ENCODE measurements at regions of chr15 and their contacts with region 1.

Region 1: GRCh38 chr15:60585743-60586708 is 107.1 kb upstream of the ICE2 start:
- DNase-seq: no peak
- H3K4me3 ChIP-seq: no peak overlapping the region
- H3K27ac ChIP-seq: peak overlapping the region in 4 of 8 donors; percentile 66 to 93 (median 73)
- H3K4me1 ChIP-seq: peaks cover 16 to 100% (median 48%) of the 10 kb centered on the region in 6 donors
- H3K27me3 ChIP-seq: peaks cover 0 to 15% (median 8%) of the 10 kb centered on the region in 7 donors
- CTCF ChIP-seq: peak; percentile 76 to 94 (median 89)
- POLR2A ChIP-seq: no peak

Region 2: DNA sequence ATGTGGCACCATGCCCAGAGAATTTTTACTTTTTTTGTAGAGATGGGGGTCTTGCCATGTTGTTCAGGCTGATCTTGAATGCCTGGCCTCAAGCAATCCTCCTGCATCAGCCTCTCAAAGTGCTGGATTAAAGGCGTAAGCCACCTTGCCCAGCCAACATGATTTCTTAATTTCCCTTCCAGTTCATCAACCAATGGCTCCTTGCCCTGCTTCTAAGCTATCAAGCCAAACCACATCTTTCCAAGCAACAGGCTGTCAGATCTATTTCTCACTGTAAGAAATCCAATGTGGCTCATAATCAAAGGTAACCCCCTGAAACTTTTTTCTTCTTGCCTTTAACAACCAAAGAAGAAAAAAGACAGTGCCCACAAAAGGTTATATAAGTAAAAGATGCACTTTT is 97.1 kb after region 1 on chr15:
- intact Hi-C with region 1: no loop called
- DNase-seq: no peak
- H3K4me3 ChIP-seq: no peak overlapping the region
- H3K27ac ChIP-seq: no peak overlapping the region
- H3K4me1 ChIP-seq: no peaks in the 10 kb centered on the region
- H3K27me3 ChIP-seq: no peaks in the 10 kb centered on the region
- CTCF ChIP-seq: no peak
- POLR2A ChIP-seq: no peak

Region 3: DNA sequence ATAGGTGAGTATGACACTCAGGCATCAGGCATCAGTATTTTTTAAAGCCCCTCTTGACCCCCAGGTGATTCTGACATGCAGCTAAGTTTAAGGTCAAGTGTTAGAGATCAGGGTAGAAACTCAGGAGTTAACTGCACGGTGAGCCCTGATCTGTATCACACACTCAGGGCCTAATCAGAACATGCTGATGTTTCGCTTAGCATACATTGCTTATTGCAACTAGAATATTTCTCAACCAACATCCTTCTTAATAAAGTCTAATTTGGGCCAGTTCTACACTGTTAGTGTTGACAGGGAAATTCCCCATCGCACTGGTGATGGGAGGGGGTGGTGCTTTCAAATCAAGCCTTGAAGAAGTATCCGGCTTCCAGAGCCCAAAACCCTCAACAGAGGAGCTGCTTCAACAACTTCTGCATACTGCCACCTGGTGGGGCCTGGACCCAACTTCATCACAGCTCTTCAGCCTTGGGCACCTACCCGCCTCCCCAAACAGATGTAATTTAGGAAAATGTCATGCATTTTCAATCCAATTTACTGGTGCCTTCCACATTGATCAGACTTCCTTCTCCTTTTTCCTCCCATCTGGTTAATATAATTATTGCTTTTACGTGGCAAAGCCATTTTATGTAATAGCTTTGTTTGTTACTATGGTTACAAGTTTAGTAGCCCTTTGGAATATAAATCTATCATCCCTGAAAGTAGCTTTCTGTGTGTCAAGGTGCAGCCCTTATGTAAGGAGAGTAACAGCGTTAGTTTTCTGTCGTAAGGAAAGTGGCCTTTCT is 330.8 kb after region 1 on chr15:
- intact Hi-C with region 1: loop called (anchors 2 kb)
- DNase-seq: peak; percentile 90
- H3K4me3 ChIP-seq: peak overlapping the region in 1 of 8 donors; percentile 16
- H3K27ac ChIP-seq: peak overlapping the region in 5 of 8 donors; percentile 15 to 50 (median 34)
- H3K4me1 ChIP-seq: peaks cover 0 to 23% (median 11%) of the 10 kb centered on the region in 6 donors
- H3K27me3 ChIP-seq: no peaks in the 10 kb centered on the region
- CTCF ChIP-seq: peak; percentile 70 to 94 (median 84)
- POLR2A ChIP-seq: no peak

Region 4: GRCh38 chr15:61834076-61834697 is 1248.2 kb after region 1 on chr15:
- intact Hi-C with region 1: loop called (anchors 10 kb)
- DNase-seq: peak; percentile 91
- H3K4me3 ChIP-seq: no peak overlapping the region
- H3K27ac ChIP-seq: no peak overlapping the region
- H3K4me1 ChIP-seq: peaks cover 0 to 24% (median 7%) of the 10 kb centered on the region in 6 donors
- H3K27me3 ChIP-seq: peaks cover 0 to 25% (median 6%) of the 10 kb centered on the region in 7 donors
- CTCF ChIP-seq: peak; percentile 76 to 98 (median 94)
- POLR2A ChIP-seq: no peak